Mammary epithelial cell (primary cell): ENCODE measurements at regions of chr15 and their contacts with region 1.

Region 1: DNA sequence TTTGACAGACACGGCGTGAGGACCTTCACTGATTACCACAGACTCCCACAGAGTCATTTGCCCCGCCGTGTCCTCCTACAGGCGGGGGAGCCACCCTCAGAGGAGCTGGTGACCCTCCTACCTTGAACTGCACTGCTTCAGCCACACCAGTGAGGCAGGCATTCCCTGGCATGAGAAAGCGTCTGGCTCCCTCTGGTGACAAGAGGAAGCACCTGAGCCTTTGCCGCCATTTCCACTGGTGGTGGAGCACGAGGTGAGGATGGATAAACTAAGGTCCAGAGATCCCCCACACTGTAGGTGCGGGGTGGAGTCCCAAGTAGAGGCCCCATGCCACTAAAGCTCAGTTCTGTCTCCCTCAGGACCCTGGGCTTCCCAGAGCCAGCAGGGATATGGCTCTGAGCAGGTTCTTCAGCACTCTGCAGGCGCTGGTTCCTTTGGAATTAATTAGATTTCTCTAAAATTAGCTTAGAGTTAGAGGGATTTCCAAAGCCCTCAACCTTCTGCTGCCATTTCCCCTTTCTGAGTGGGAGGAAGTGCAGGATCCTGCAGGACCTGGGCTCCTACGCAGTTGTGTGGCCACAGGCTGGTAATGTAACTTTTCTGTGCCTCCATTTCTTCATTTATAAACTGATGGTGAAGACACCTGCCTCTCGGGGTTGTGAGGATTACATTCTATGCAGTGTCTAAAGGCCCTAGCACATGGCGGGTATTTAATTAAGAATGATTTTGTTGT is 224.0 kb downstream of the SLCO3A1 start:
- DNase-seq: peak; percentile 59
- H3K4me3 ChIP-seq: no peak overlapping the region
- H3K27ac ChIP-seq: no peak overlapping the region
- H3K4me1 ChIP-seq: no peaks in the 10 kb centered on the region
- H3K27me3 ChIP-seq: no peaks in the 10 kb centered on the region
- CTCF ChIP-seq: peak; percentile 84 to 89

Region 2: GRCh38 chr15:91302588-91303439 is 774.7 kb before region 1 on chr15:
- CTCF ChIA-PET with region 1: no interaction called
- dilution Hi-C with region 1: no loop called
- in situ Hi-C with region 1: loop called (anchors 10 to 25 kb)
- intact Hi-C with region 1: loop called (anchors 1 kb)
- DNase-seq: peak; percentile 57
- H3K4me3 ChIP-seq: no peak overlapping the region
- H3K27ac ChIP-seq: no peak overlapping the region
- H3K4me1 ChIP-seq: no peaks in the 10 kb centered on the region
- H3K27me3 ChIP-seq: peaks cover 3% of the 10 kb centered on the region
- CTCF ChIP-seq: peak; percentile 62 to 79

Region 3: DNA sequence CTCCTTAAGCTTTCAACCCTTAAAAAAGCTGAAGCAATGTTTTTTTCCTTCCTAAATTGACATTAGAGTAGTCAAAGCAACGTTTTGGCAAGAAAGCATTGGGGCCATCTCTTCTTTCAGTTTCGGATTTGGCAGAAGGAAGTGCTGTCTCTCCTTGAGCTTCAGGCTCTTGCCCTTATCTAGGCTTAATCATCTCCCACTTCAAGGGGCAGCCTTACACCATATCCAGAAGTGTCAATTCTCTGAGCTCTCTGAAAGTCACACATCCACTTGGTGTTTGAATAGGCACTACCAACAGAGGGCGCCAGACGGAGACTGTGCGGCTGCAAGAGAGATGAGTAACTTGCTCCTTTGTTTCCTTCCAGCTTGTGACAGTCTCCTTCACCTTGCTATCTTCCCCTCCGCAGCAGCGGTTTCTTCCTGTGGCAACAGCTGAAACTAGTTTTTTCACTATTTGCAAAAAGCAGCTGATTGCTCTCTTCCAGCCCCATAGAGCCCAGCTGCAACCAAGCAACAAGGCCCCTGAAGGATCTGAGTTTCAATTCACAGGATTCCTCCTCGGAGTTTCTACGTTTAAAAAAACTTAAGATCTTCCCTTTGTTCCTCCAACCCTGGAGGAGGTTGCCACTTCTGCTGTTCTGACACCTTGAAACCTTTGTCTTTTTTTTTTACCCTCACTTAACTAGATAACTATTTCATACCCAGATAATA is 371.0 kb before region 1 on chr15:
- CTCF ChIA-PET with region 1: interaction called, 5 read pairs
- dilution Hi-C with region 1: no loop called
- in situ Hi-C with region 1: loop called (anchors 10 kb)
- intact Hi-C with region 1: loop called (anchors 1 kb)
- DNase-seq: peak; percentile 75
- H3K4me3 ChIP-seq: no peak overlapping the region
- H3K27ac ChIP-seq: no peak overlapping the region
- H3K4me1 ChIP-seq: peaks cover 13% of the 10 kb centered on the region
- H3K27me3 ChIP-seq: peaks cover 3% of the 10 kb centered on the region
- CTCF ChIP-seq: peak; percentile 99

Region 4: DNA sequence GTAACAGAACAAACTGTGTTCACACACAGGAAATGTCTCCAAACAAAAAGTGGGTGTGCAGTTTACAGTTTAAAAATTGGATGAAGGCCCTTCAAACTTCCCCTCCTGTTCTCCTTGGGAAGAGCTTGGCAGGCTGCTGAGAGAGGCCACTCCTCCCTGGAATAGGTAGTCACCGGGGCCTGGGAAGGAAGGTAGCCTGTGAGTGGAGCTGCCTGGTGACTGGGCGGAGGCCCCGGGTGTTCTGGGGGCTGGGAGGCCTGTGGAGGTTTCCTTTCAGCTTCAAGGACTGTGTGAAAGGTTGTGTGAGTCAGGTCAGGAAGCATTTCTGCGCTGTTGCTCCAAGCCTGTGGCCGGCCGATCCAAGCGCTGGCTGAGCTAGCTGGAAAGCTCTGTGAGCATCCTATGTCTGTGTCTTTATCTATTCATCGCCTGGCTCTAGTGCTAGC is 209.9 kb before region 1 on chr15:
- CTCF ChIA-PET with region 1: interaction called, 3 read pairs
- dilution Hi-C with region 1: loop called (anchors 25 kb)
- in situ Hi-C with region 1: loop called in 1 of 2 experiments (anchors 10 kb)
- intact Hi-C with region 1: no loop called
- DNase-seq: peak; percentile 99
- H3K4me3 ChIP-seq: peak overlapping the region; percentile 10 to 52 (median 32)
- H3K27ac ChIP-seq: peak overlapping the region; percentile 99
- H3K4me1 ChIP-seq: peaks cover 49% of the 10 kb centered on the region
- H3K27me3 ChIP-seq: no peaks in the 10 kb centered on the region
- CTCF ChIP-seq: no peak

Region 5: DNA sequence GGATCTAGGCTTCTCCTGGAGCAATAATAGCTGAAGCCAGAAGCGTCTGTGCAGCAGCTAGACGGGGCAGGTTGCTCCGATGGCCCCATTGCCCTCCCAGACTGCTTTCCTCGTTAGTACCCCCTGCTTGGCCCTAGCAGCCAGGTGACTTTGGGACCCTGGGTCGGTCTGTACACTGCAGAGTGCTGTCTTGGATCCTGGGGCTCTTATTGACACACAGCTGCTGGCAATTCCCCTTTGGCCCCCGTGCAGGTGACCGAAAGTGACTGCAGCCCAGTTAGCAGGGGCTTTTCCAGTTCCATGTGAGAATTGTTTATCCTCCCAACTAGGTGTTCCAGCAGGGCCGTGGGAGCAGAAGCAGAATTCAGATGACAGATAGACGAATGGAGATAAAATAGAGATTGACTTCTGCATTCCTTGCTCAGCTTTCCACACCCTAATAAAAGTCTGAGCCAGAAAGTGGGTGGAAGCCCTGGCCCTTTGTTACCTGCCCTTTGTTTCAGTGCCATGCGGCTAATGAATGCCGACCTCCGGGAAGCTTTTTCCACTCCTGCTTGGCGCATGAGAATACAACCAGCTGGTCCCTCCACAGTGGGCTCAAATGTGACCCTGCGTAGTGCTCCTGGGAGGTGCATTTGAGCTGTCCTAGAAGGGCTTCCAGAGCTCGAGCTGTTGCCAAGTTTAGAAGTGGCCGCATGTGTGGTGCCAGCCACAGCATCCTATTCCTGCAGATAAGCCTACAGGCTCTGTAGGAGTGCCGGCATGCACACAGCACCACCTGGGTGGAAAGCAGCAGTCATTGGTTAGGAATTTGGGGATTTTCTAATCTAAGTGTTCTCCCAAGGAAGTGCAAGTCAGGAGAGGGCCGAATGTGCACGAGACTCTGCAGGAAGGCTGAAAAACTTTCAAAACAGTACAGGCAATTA is 129.6 kb before region 1 on chr15:
- CTCF ChIA-PET with region 1: no interaction called
- dilution Hi-C with region 1: loop called (anchors 5 kb)
- in situ Hi-C with region 1: no loop called
- intact Hi-C with region 1: loop called (anchors 1 kb)
- DNase-seq: peak; percentile 95
- H3K4me3 ChIP-seq: peak overlapping the region in 2 of 3 experiments; percentile 3 to 21
- H3K27ac ChIP-seq: peak overlapping the region; percentile 85
- H3K4me1 ChIP-seq: peaks cover 69% of the 10 kb centered on the region
- H3K27me3 ChIP-seq: no peaks in the 10 kb centered on the region
- CTCF ChIP-seq: no peak

Region 6: GRCh38 chr15:92553317-92553716 is 475.8 kb after region 1 on chr15:
- CTCF ChIA-PET with region 1: no interaction called
- dilution Hi-C with region 1: no loop called
- in situ Hi-C with region 1: no loop called
- intact Hi-C with region 1: no loop called
- DNase-seq: no peak
- H3K4me3 ChIP-seq: no peak overlapping the region
- H3K27ac ChIP-seq: no peak overlapping the region
- H3K4me1 ChIP-seq: no peaks in the 10 kb centered on the region
- H3K27me3 ChIP-seq: no peaks in the 10 kb centered on the region
- CTCF ChIP-seq: no peak

Region 7: GRCh38 chr15:92714477-92715401 is 637.2 kb after region 1 on chr15:
- CTCF ChIA-PET with region 1: no interaction called
- dilution Hi-C with region 1: no loop called
- in situ Hi-C with region 1: loop called in 1 of 2 experiments (anchors 25 kb)
- intact Hi-C with region 1: no loop called
- DNase-seq: peak; percentile 51
- H3K4me3 ChIP-seq: peak overlapping the region; percentile 5 to 50 (median 50)
- H3K27ac ChIP-seq: no peak overlapping the region
- H3K4me1 ChIP-seq: peaks cover 11% of the 10 kb centered on the region
- H3K27me3 ChIP-seq: no peaks in the 10 kb centered on the region
- CTCF ChIP-seq: peak; percentile 85 to 90